ENCODE measurements at regions of chr4 and their contacts with region 1.

Region 1: GRCh38 chr4:158624889-158625478 is 46.7 kb downstream of the C4orf46 start:
- DNase-seq: no peak
- ATAC-seq: no peak
- H3K4me3 Mint-ChIP-seq: no peak overlapping the region
- H3K27ac Mint-ChIP-seq: no peak overlapping the region
- H3K4me1 Mint-ChIP-seq: no peaks in the 10 kb centered on the region
- H3K27me3 Mint-ChIP-seq: peaks cover 12% of the 10 kb centered on the region

Region 2: GRCh38 chr4:157992038-157992705 is 632.8 kb before region 1 on chr4:
- CTCF ChIA-PET with region 1: no interaction called
- POLR2A ChIA-PET with region 1: no interaction called
- intact Hi-C with region 1: loop called in 1 of 2 experiments (anchors 5 kb)
- DNase-seq: peak; percentile 26
- ATAC-seq: no peak
- H3K4me3 Mint-ChIP-seq: no peak overlapping the region
- H3K27ac Mint-ChIP-seq: no peak overlapping the region
- H3K4me1 Mint-ChIP-seq: no peaks in the 10 kb centered on the region
- H3K27me3 Mint-ChIP-seq: no peaks in the 10 kb centered on the region

Region 3: DNA sequence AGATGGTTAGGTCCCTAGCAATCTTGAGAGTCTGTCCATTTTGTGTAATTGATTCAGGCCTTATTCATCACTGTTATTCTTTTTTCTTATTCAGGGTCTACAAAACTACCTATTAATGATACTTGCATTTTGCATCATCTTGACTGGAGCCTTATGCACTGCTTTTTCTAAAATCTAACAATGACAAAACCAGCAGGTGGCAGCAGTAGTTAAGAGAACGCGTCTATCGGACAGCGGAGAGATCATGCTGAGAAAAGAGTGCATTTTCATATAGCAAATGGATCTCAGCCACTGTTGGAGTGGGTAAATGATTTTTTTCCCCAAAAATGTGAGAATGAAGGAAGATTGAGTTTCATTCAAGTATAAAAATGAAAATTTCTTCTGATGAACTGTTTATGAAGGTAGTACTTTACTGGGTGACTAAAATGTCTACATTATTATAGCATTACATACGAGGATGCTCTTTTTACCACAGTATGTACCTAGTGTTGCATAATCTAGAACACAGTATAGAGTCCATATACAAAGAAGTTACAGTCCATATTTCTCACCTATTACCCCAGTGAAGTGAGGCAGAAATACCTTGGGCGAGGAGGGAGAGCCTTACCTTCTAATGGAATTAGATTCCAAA is 371.5 kb before region 1 on chr4:
- CTCF ChIA-PET with region 1: no interaction called
- POLR2A ChIA-PET with region 1: no interaction called
- intact Hi-C with region 1: loop called in 1 of 2 experiments (anchors 2 kb)
- DNase-seq: peak; percentile 65
- ATAC-seq: peak; percentile 73
- H3K4me3 Mint-ChIP-seq: no peak overlapping the region
- H3K27ac Mint-ChIP-seq: no peak overlapping the region
- H3K4me1 Mint-ChIP-seq: no peaks in the 10 kb centered on the region
- H3K27me3 Mint-ChIP-seq: peaks cover 6% of the 10 kb centered on the region

Region 4: GRCh38 chr4:158259955-158260575 is 364.9 kb before region 1 on chr4:
- CTCF ChIA-PET with region 1: interaction called, 5 read pairs
- POLR2A ChIA-PET with region 1: no interaction called
- intact Hi-C with region 1: loop called (anchors 1 to 2 kb)
- DNase-seq: no peak
- ATAC-seq: no peak
- H3K4me3 Mint-ChIP-seq: no peak overlapping the region
- H3K27ac Mint-ChIP-seq: no peak overlapping the region
- H3K4me1 Mint-ChIP-seq: no peaks in the 10 kb centered on the region
- H3K27me3 Mint-ChIP-seq: peaks cover 7% of the 10 kb centered on the region

Region 5: GRCh38 chr4:158496030-158496741 is 128.8 kb before region 1 on chr4:
- CTCF ChIA-PET with region 1: no interaction called
- POLR2A ChIA-PET with region 1: no interaction called
- intact Hi-C with region 1: loop called (anchors 1 to 5 kb)
- DNase-seq: peak; percentile 66
- ATAC-seq: no peak
- H3K4me3 Mint-ChIP-seq: no peak overlapping the region
- H3K27ac Mint-ChIP-seq: no peak overlapping the region
- H3K4me1 Mint-ChIP-seq: no peaks in the 10 kb centered on the region
- H3K27me3 Mint-ChIP-seq: peaks cover 9% of the 10 kb centered on the region

Region 6: DNA sequence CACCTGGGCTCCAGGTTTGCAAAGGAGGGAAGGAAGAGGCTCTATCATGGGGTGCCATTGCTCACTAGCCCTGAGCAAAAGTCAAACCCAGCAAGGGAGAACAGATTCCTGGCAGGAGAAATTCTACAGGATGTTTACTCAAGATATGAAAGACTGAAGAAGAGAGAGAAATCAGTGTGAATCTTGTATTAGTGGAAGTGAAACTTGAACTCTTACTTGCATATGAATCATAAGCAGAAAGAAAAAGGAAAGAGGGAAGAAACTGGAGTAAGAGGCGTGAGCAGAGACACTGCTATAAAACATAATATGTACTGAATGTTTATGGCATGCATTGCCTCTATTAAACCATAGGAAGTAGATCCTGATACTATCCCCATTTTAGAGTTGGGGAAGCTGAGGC is 14.2 kb before region 1 on chr4:
- CTCF ChIA-PET with region 1: no interaction called
- POLR2A ChIA-PET with region 1: no interaction called
- intact Hi-C with region 1: no loop called
- DNase-seq: no peak
- ATAC-seq: peak; percentile 47
- H3K4me3 Mint-ChIP-seq: no peak overlapping the region
- H3K27ac Mint-ChIP-seq: no peak overlapping the region
- H3K4me1 Mint-ChIP-seq: peaks cover 7% of the 10 kb centered on the region
- H3K27me3 Mint-ChIP-seq: peaks cover 11% of the 10 kb centered on the region

Measured in activated CD4-positive, alpha-beta T cell treated with anti-CD3 and anti-CD28 coated beads for 36 hours (primary cell).